Caco-2 (cell line): ENCODE measurements at regions of chr1 and their contacts with region 1.

Region 1: DNA sequence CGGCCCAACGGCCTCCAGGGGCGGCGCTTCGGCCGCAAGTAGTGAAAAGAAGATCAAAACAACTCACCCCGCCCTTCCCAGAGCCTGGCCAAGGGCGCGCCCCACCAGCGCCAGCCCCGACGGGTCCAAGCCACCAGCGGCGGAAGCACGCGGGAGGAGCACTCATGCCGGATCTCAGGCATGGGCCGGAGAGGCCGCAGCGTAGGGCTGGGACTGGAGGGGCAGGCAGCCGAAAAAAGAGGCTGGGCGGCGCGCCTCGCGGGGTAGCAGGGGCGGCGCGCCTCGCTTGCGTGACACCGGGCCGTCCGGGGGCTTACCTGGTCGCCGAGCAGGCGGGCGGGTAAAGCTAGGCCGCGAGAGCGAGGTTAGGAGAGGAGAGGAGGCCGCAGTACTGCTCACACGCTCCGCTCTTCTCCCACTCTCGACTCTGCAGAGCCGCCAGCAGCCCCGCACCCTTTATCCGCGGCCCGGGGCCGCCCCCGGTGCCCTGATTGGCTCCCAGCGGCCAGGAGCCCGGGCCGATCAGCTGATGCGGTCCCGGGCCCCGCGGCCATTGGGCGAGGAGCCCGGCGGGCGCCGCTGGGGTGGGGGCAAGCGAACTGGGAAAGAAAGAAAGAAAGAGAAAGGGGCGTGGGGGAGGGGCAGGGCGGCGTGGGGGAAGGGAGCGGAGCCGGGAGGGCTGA is at the start of gene GLUL:
- DNase-seq: peak; percentile 95 to 98
- H3K4me3 ChIP-seq: peak within 1 kb of the TSS; percentile 95
- H3K4me3 Mint-ChIP-seq: peak within 1 kb of the TSS; percentile 99
- H3K27ac Mint-ChIP-seq: peak within 1 kb of the TSS; percentile 97
- H3K4me1 ChIP-seq: peaks cover 24% of the 10 kb centered on the region
- H3K4me1 Mint-ChIP-seq: peaks cover 22% of the 10 kb centered on the region
- H3K27me3 ChIP-seq: no peaks in the 10 kb centered on the region
- H3K27me3 Mint-ChIP-seq: no peaks in the 10 kb centered on the region
- CTCF ChIP-seq: no peak
- total RNA-seq, gene GLUL: 394 TPM in 2 replicates

Region 2: GRCh38 chr1:182101415-182102042 is 290.0 kb before region 1 on chr1:
- CTCF ChIA-PET with region 1: no interaction called
- POLR2A ChIA-PET with region 1: interaction called, 17 read pairs
- intact Hi-C with region 1: loop called (anchors 5 kb)
- DNase-seq: peak; percentile 93 to 97
- H3K4me3 ChIP-seq: no peak overlapping the region
- H3K4me3 Mint-ChIP-seq: peak overlapping the region; percentile 71
- H3K27ac Mint-ChIP-seq: peak overlapping the region; percentile 98
- H3K4me1 ChIP-seq: peaks cover 38% of the 10 kb centered on the region
- H3K4me1 Mint-ChIP-seq: peaks cover 47% of the 10 kb centered on the region
- H3K27me3 ChIP-seq: no peaks in the 10 kb centered on the region
- H3K27me3 Mint-ChIP-seq: no peaks in the 10 kb centered on the region
- CTCF ChIP-seq: no peak

Region 3: DNA sequence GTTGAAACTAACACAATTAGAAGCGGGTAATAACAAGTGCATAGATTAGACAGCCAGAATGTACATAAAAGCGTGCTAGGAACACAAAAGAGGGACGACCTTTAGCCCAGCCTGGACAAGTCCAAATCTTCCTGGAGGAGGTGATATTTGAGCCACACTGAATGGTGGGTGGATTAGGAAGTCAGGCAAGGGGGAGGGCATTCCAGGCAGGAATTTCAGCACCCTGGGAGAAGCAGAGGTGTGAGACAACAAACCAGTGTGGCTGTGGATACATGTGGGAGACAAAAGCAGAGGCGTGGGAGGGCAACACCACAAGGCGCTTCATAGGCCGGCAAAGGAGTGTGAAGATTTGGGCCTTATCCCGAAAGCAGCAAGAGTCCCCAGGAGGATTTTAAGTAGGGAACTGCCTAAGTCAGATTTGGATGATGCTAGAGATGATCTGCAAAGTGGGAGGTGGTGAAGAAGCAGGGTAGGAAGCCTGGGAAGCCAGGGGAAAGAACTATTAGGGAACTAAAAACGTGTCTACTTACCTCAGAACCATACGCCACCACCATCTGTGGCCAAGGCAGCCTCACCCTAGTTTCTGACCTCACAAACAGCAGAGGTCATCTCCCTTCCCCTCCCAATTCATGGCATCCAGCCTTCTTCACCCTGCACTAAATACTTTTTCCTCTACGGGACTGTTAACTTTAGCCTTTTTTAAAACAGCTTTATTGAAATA is 81.7 kb before region 1 on chr1:
- CTCF ChIA-PET with region 1: no interaction called
- POLR2A ChIA-PET with region 1: interaction called, 4 read pairs
- intact Hi-C with region 1: loop called (anchors 2 kb)
- DNase-seq: peak; percentile 72 to 82
- H3K4me3 ChIP-seq: no peak overlapping the region
- H3K4me3 Mint-ChIP-seq: peak overlapping the region; percentile 52
- H3K27ac Mint-ChIP-seq: peak overlapping the region; percentile 90
- H3K4me1 ChIP-seq: peaks cover 18% of the 10 kb centered on the region
- H3K4me1 Mint-ChIP-seq: peaks cover 22% of the 10 kb centered on the region
- H3K27me3 ChIP-seq: no peaks in the 10 kb centered on the region
- H3K27me3 Mint-ChIP-seq: no peaks in the 10 kb centered on the region
- CTCF ChIP-seq: no peak

Region 4: DNA sequence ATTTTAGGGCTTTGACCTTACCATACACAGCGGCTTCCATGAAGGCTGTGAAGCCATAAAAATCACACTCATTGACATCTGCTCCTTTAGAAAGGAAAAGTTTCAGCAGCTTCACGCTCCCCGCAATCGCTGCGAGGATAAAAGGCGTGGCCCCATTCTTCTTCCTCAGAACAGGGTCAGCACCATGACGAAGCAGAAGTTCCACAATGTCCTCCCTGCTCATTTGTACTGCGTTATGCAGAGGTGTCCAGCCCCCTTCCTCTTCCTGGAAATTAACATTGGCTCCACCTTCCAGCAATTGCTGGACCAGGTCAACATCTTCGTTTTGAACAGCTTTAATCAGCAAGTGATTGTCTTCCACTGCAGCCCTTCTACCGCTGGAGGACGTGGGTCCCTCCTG is 194.9 kb after region 1 on chr1:
- CTCF ChIA-PET with region 1: no interaction called
- POLR2A ChIA-PET with region 1: no interaction called
- intact Hi-C with region 1: no loop called
- DNase-seq: no peak
- H3K4me3 ChIP-seq: no peak overlapping the region
- H3K4me3 Mint-ChIP-seq: no peak overlapping the region
- H3K27ac Mint-ChIP-seq: no peak overlapping the region
- H3K4me1 ChIP-seq: no peaks in the 10 kb centered on the region
- H3K4me1 Mint-ChIP-seq: no peaks in the 10 kb centered on the region
- H3K27me3 ChIP-seq: no peaks in the 10 kb centered on the region
- H3K27me3 Mint-ChIP-seq: no peaks in the 10 kb centered on the region
- CTCF ChIP-seq: no peak